ENCODE measurements at regions of chr19 and their contacts with region 1.

Region 1: GRCh38 chr19:12564016-12564664 is 12.9 kb upstream of the ZNF564 start:
- DNase-seq: peak; percentile 86 to 96 (median 96)
- ATAC-seq: peak; percentile 82 to 94
- H3K4me3 ChIP-seq: no peak overlapping the region
- H3K27ac ChIP-seq: no peak overlapping the region
- H3K4me1 ChIP-seq: no peaks in the 10 kb centered on the region
- H3K27me3 ChIP-seq: no peaks in the 10 kb centered on the region

Region 2: GRCh38 chr19:12495002-12495802 is 68.9 kb before region 1 on chr19:
- intact Hi-C with region 1: no loop called
- DNase-seq: peak; percentile 95 to 98 (median 97)
- ATAC-seq: peak; percentile 100
- H3K4me3 ChIP-seq: peak overlapping the region; percentile 58
- H3K27ac ChIP-seq: peak overlapping the region; percentile 91
- H3K4me1 ChIP-seq: no peaks in the 10 kb centered on the region
- H3K27me3 ChIP-seq: no peaks in the 10 kb centered on the region

Region 3: GRCh38 chr19:12666265-12667048 is 102.3 kb after region 1 on chr19 and contains the starts of genes MAN2B1 and WDR83:
- intact Hi-C with region 1: loop called in 1 of 4 experiments (anchors 10 kb)
- DNase-seq: peak; percentile 73 to 92 (median 91)
- ATAC-seq: peak; percentile 84 to 86
- H3K4me3 ChIP-seq: peak within 1 kb of the TSS; percentile 98
- H3K27ac ChIP-seq: peak within 1 kb of the TSS; percentile 75
- H3K4me1 ChIP-seq: peaks cover 7% of the 10 kb centered on the region
- H3K27me3 ChIP-seq: no peaks in the 10 kb centered on the region
- total RNA-seq, gene MAN2B1: 32.7 to 52.6 (median 42.1) TPM
- total RNA-seq, gene WDR83: 6.3 to 10.5 (median 8.1) TPM

Region 4: GRCh38 chr19:12766051-12766521 is 201.9 kb after region 1 on chr19:
- intact Hi-C with region 1: no loop called
- DNase-seq: peak; percentile 79 to 96 (median 95)
- ATAC-seq: peak; percentile 86 to 91
- H3K4me3 ChIP-seq: no peak overlapping the region
- H3K27ac ChIP-seq: no peak overlapping the region
- H3K4me1 ChIP-seq: no peaks in the 10 kb centered on the region
- H3K27me3 ChIP-seq: no peaks in the 10 kb centered on the region